ENCODE measurements at regions of chr17 and their contacts with region 1.

Region 1: GRCh38 chr17:27980043-27980442 is 62.4 kb upstream of the NLK start:
- DNase-seq: peak in 1 of 2 donors; percentile 50
- ATAC-seq: peak; percentile 70 to 91 (median 74)
- H3K4me3 ChIP-seq: no peak overlapping the region
- H3K27ac ChIP-seq: peak overlapping the region in 5 of 10 donors; percentile 44 to 77 (median 68)
- H3K4me1 ChIP-seq: peaks cover under 1 to 43% (median 9%) of the 10 kb centered on the region in 9 donors
- H3K27me3 ChIP-seq: peaks cover 0 to 4% (median 0%) of the 10 kb centered on the region in 7 donors
- CTCF ChIP-seq: no peak

Region 2: GRCh38 chr17:27915709-27916108 is 64.3 kb before region 1 on chr17:
- intact Hi-C with region 1: loop called in 1 of 10 experiments (anchors 10 kb)
- DNase-seq: no peak
- ATAC-seq: no peak
- H3K4me3 ChIP-seq: no peak overlapping the region
- H3K27ac ChIP-seq: no peak overlapping the region
- H3K4me1 ChIP-seq: peaks cover 0 to 6% (median 0%) of the 10 kb centered on the region in 9 donors
- H3K27me3 ChIP-seq: no peaks in the 10 kb centered on the region
- CTCF ChIP-seq: no peak

Region 3: DNA sequence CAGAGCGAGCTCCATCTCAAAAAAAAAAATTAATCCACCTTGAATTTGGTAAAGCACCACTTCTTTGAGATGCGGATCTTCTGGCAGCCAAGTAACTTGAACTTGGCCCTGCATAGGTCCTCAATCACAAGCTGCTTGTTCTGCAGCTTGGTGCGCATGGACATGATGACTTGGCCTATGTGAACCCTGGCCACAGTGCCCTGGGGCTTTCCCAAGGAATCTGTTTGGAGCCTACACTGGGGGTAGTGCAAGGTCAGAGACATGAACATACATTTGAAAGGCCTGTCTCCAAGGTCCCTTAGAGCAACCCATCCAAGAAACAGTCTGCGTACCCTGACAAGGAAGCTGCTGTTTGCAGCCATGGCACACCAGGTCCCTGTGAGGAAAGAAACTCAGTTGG is 42.0 kb after region 1 on chr17:
- intact Hi-C with region 1: no loop called
- DNase-seq: no peak
- ATAC-seq: no peak
- H3K4me3 ChIP-seq: no peak overlapping the region
- H3K27ac ChIP-seq: no peak overlapping the region
- H3K4me1 ChIP-seq: peaks cover 0 to 11% (median 0%) of the 10 kb centered on the region in 9 donors
- H3K27me3 ChIP-seq: no peaks in the 10 kb centered on the region
- CTCF ChIP-seq: no peak

Region 4: GRCh38 chr17:28033972-28034714 is 54.1 kb after region 1 on chr17:
- intact Hi-C with region 1: loop called in 1 of 10 experiments (anchors 10 kb)
- DNase-seq: peak in 1 of 2 donors; percentile 17
- ATAC-seq: peak; percentile 50 to 91 (median 82)
- H3K4me3 ChIP-seq: no peak overlapping the region
- H3K27ac ChIP-seq: peak overlapping the region in 7 of 10 donors; percentile 15 to 71 (median 56)
- H3K4me1 ChIP-seq: peaks cover 0 to 19% (median 0%) of the 10 kb centered on the region in 9 donors
- H3K27me3 ChIP-seq: no peaks in the 10 kb centered on the region
- CTCF ChIP-seq: no peak

Region 5: GRCh38 chr17:28041068-28041843 is 61.2 kb after region 1 on chr17:
- intact Hi-C with region 1: loop called in 2 of 10 experiments (anchors 10 kb)
- DNase-seq: peak; percentile 99 to 100
- ATAC-seq: peak; percentile 98 to 99 (median 98)
- H3K4me3 ChIP-seq: peak overlapping the region; percentile 69 to 97 (median 94)
- H3K27ac ChIP-seq: peak overlapping the region; percentile 79 to 98 (median 96)
- H3K4me1 ChIP-seq: peaks cover 7 to 50% (median 41%) of the 10 kb centered on the region in 9 donors
- H3K27me3 ChIP-seq: no peaks in the 10 kb centered on the region
- CTCF ChIP-seq: no peak

Region 6: DNA sequence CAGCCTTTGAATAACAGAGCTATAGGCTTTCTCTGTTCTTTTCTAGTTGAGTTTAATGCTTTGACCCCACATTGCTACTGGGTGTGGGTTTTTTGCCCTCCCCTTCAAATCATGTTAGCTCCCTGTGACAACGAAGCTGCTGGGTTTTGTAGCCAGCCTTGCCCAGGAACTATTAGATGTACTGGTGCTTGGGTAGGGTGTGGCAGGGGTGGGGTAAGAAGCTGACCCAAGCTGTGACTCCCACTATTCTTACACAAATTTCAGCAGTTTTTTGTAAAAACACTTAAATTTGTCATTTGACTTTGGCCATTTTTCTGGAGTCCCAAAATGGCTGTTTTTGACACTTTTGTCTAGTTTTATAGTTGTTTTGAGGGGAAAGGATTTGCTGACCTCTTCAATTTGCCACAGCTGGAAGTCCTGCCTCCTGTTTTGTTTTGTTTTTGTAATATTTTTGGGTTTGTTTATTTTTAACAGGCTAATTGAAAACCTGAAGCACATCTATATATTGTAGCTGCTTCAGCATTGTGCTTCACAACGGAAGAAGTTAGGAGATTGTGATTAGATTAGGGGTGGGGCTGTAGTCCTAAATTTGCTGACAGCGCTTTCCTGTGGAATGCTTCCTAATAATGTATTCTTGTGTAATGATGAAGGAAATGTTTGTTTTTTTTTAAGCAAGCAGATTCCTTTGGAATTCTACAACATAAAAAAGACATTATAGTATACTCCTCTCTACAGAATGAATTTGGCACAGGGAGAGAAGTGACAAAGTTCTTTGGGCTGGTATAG is 132.4 kb after region 1 on chr17:
- intact Hi-C with region 1: loop called in 1 of 10 experiments (anchors 10 kb)
- DNase-seq: no peak
- ATAC-seq: peak in 7 of 8 donors; percentile 17 to 87 (median 84)
- H3K4me3 ChIP-seq: no peak overlapping the region
- H3K27ac ChIP-seq: peak overlapping the region in 9 of 10 donors; percentile 2 to 61 (median 48)
- H3K4me1 ChIP-seq: peaks cover 2 to 30% (median 22%) of the 10 kb centered on the region in 9 donors
- H3K27me3 ChIP-seq: no peaks in the 10 kb centered on the region
- CTCF ChIP-seq: no peak